Caco-2 (cell line): ENCODE measurements at regions of chr5 and their contacts with region 1.

Region 1: DNA sequence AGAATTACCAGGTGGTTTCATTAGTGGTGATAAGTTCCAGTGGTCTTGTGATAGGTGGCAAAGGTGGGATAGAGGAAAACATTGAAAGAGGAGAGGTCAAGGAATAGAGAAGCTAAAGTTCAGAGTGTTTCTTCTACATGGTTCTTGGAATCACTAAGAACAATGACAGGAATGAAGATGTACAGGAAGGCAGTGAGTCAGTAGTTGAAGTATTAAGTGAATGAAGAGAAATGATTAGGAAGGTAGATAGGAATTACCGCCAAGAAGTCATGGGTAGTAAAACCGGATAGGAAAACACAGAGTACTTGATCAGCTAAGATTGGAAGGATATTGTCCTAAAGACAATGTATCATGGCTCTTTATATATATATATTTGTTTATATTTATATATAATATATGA is 37.9 kb upstream of the RASA1 start:
- DNase-seq: no peak
- H3K4me3 ChIP-seq: no peak overlapping the region
- H3K4me3 Mint-ChIP-seq: no peak overlapping the region
- H3K27ac Mint-ChIP-seq: no peak overlapping the region
- H3K4me1 ChIP-seq: peaks cover 6% of the 10 kb centered on the region
- H3K4me1 Mint-ChIP-seq: peaks cover 8% of the 10 kb centered on the region
- H3K27me3 ChIP-seq: no peaks in the 10 kb centered on the region
- H3K27me3 Mint-ChIP-seq: no peaks in the 10 kb centered on the region
- CTCF ChIP-seq: no peak

Region 2: GRCh38 chr5:87258507-87258906 is 28.7 kb after region 1 on chr5:
- CTCF ChIA-PET with region 1: no interaction called
- POLR2A ChIA-PET with region 1: no interaction called
- intact Hi-C with region 1: loop called (anchors 5 kb)
- DNase-seq: no peak
- H3K4me3 ChIP-seq: no peak overlapping the region
- H3K4me3 Mint-ChIP-seq: no peak overlapping the region
- H3K27ac Mint-ChIP-seq: no peak overlapping the region
- H3K4me1 ChIP-seq: peaks cover 3% of the 10 kb centered on the region; the same call in 1 of the 2 replicates
- H3K4me1 Mint-ChIP-seq: no peaks in the 10 kb centered on the region
- H3K27me3 ChIP-seq: no peaks in the 10 kb centered on the region
- H3K27me3 Mint-ChIP-seq: peaks cover 5% of the 10 kb centered on the region
- CTCF ChIP-seq: no peak